HepG2 (cell line): ENCODE measurements at regions of chr17 and their contacts with region 1.

Region 1: DNA sequence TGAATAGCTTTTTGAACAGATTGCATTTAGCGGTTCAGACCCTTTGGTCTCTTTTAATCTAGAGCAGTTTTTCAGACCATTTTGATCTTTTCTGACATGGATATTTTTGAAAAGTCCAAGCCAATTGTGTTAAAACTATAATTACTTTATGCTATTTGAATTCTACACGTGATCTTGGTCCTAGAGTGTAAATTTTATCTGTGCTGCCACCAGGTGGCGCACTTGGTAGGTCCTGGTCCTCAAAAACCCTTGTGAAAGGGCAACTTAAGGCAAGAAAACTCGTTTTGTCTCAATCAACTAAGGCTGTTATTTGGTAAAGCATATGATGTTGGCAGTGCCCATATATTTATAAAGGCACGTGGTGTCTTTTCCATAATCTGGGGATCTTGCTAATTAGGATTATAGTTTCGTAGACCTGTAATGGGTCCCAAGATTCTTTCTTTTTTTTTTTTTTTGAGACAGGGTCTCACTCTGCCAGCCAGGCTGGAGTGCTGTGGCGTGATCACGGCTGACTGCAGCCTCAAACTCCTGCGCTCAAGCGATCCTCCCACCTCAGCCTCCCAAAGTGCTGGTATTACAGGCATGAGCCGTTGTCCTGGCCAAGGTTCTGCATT is 43.9 kb upstream of the TEX2 start:
- DNase-seq: peak; percentile 60
- ATAC-seq: peak; percentile 64
- H3K4me3 ChIP-seq: no peak overlapping the region
- H3K27ac ChIP-seq: no peak overlapping the region
- H3K4me1 ChIP-seq: peaks cover 41% of the 10 kb centered on the region
- H3K27me3 ChIP-seq: no peaks in the 10 kb centered on the region
- CTCF ChIP-seq: peak; percentile 84
- EP300 ChIP-seq: no peak
- POLR2A ChIP-seq: no peak
- RAD21 ChIP-seq: peak; percentile 77

Region 2: GRCh38 chr17:64369007-64369893 is 62.3 kb after region 1 on chr17:
- CTCF ChIA-PET with region 1: no interaction called
- POLR2A ChIA-PET with region 1: no interaction called
- in situ Hi-C with region 1: no loop called
- intact Hi-C with region 1: no loop called
- DNase-seq: peak; percentile 76
- ATAC-seq: peak; percentile 96
- H3K4me3 ChIP-seq: peak overlapping the region in 2 of 3 experiments; percentile 29 to 34; a peak in 2 of 6 replicates
- H3K27ac ChIP-seq: peak overlapping the region; percentile 66
- H3K4me1 ChIP-seq: peaks cover 18% of the 10 kb centered on the region
- H3K27me3 ChIP-seq: no peaks in the 10 kb centered on the region
- CTCF ChIP-seq: no peak
- EP300 ChIP-seq: peak in 1 of 2 experiments; percentile 44; a peak in 1 of 4 replicates
- POLR2A ChIP-seq: no peak; a peak in 1 of 4 replicates
- RAD21 ChIP-seq: no peak

Region 3: GRCh38 chr17:64496786-64497564 is 190.0 kb after region 1 on chr17 and contains the start of gene POLG2:
- CTCF ChIA-PET with region 1: no interaction called
- POLR2A ChIA-PET with region 1: interaction called, 4 read pairs
- in situ Hi-C with region 1: loop called (anchors 10 kb)
- intact Hi-C with region 1: no loop called
- DNase-seq: peak; percentile 92
- ATAC-seq: peak; percentile 86
- H3K4me3 ChIP-seq: peak within 1 kb of the TSS; percentile 65 to 90 (median 68)
- H3K27ac ChIP-seq: peak within 1 kb of the TSS; percentile 74
- H3K4me1 ChIP-seq: peaks cover 73% of the 10 kb centered on the region
- H3K27me3 ChIP-seq: no peaks in the 10 kb centered on the region; a peak in 1 of 5 replicates
- CTCF ChIP-seq: peak; percentile 79
- EP300 ChIP-seq: peak in 1 of 2 experiments; percentile 69; a peak in 1 of 4 replicates
- POLR2A ChIP-seq: peak; percentile 90 to 98
- RAD21 ChIP-seq: peak; percentile 59
- total RNA-seq, gene POLG2: 16.2 and 25.5 TPM in 2 replicates